ENCODE measurements at regions of chr1 and their contacts with region 1.

Region 1: DNA sequence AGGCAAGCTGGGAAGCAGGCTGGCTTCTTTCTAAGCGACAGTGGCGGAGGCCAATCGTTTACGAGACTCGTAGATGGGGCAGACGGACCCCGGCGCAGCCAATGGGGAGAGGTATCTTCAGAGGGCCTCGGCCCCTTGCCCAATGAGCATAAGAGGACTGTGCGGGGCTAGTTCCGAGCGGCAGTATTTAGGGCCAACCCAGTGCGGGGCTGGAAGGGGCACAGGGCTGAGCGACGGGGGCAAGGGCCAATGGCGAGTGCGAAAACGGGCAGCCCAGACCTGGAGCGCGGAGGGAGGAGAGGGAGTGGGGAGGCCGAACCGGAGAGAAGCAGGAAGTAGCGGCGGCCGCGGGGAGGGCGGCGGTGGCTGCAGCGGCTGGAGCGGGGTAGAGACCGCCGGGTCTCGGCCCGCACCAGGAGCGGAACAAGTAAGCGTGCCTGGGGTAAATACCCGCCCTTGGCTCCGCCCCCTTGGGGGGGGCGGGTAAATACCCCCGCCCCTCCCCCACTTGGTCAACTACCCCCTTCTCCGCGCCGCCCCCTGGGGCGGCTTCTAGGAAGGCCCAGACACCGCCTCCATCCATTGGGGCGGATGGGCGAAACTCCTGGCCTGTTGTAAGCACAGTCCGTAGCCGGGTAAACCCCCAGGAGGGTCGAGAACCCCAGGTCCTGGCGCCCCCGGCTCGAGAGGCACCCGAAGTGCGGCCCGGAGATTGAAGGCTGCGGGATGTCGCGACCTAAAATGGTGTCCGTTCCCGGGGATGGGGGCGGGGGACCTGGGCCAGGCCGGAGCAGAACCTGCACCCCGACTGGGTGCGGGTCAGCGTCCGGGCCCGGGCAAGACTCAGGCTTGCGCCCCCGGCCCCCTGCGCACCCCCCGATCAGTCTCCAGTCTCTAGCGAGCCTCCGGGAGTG is at the start of gene ZNF687:
- DNase-seq: peak; percentile 98 to 99
- ATAC-seq: peak; percentile 80 to 94 (median 84)
- H3K4me3 ChIP-seq: peak within 1 kb of the TSS; percentile 82
- H3K4me3 Mint-ChIP-seq: peak within 1 kb of the TSS; percentile 98
- H3K27ac ChIP-seq: peak within 1 kb of the TSS; percentile 93
- H3K27ac Mint-ChIP-seq: peak within 1 kb of the TSS; percentile 95 to 100
- H3K4me1 ChIP-seq: peaks cover 24% of the 10 kb centered on the region
- H3K4me1 Mint-ChIP-seq: peaks cover 31 to 33% of the 10 kb centered on the region in 2 donors
- H3K27me3 ChIP-seq: no peaks in the 10 kb centered on the region
- H3K27me3 Mint-ChIP-seq: no peaks in the 10 kb centered on the region
- CTCF ChIP-seq: no peak
- total RNA-seq, gene ZNF687: 48.1 to 52.2 (median 48.6) TPM

Region 2: DNA sequence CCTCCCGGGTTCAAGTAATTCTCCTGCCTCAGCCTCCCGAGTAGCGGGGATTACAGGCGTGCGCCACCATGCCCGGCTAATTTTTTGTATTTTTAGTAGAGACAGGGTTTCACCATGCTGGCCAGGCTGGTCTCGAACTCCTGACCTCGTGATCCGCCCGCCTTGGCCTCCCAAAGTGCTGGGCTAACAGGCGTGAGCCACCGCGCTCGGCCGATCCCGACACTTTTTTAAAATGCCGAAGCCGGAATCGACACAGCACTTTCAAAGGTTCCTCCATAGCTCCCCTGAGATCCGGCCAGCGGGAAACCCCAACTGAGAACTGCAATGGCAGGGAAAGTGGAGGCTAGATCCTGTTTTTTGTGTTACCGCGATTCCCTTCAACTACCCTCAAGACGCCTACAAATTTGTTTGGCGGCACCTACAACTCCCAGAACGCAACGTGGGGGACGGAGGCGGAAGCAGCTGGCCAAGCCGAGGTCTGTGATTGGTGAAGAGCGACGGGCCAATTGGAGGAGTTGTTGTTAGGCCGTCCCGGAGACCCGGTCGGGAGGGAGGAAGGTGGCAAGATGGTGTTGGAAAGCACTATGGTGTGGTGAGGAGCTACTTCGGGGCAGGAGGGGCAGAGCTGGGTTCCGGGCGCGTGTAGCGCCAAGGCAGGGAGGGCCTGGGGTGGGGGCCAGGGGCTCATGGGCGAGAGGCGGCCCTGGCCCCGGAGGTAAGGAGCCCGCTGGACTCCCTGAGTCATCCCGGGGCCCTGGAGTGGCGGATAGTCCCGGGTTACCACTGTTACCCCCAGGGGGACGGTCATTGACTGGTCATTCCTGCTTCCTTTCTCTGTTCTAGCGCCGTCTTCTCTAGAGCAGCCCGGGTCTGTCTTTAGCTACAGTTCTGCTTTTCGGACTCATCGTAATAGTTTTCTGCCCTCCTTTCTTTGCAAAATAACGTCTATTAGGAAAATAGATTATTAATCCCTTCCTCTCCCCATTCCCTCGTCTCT is 27.7 kb before region 1 on chr1 and contains the start of gene PSMD4:
- intact Hi-C with region 1: loop called (anchors 1 kb)
- DNase-seq: peak; percentile 89 to 98
- ATAC-seq: peak; percentile 91 to 99 (median 95)
- H3K4me3 ChIP-seq: peak within 1 kb of the TSS; percentile 81
- H3K4me3 Mint-ChIP-seq: peak within 1 kb of the TSS; percentile 96
- H3K27ac ChIP-seq: peak within 1 kb of the TSS; percentile 79
- H3K27ac Mint-ChIP-seq: peak within 1 kb of the TSS; percentile 94 to 97
- H3K4me1 ChIP-seq: peaks cover 15% of the 10 kb centered on the region
- H3K4me1 Mint-ChIP-seq: peaks cover 31 to 32% of the 10 kb centered on the region in 2 donors
- H3K27me3 ChIP-seq: no peaks in the 10 kb centered on the region
- H3K27me3 Mint-ChIP-seq: no peaks in the 10 kb centered on the region
- CTCF ChIP-seq: no peak
- total RNA-seq, gene PSMD4: 94.2 to 101 (median 99.3) TPM

Region 3: GRCh38 chr1:151340870-151341754 is 58.9 kb after region 1 on chr1:
- intact Hi-C with region 1: loop called (anchors 1 kb)
- DNase-seq: peak in 1 of 2 donors; percentile 87
- ATAC-seq: peak; percentile 83 to 92 (median 86)
- H3K4me3 ChIP-seq: no peak overlapping the region
- H3K4me3 Mint-ChIP-seq: no peak overlapping the region
- H3K27ac ChIP-seq: no peak overlapping the region
- H3K27ac Mint-ChIP-seq: peak overlapping the region; percentile 22 to 80
- H3K4me1 ChIP-seq: peaks cover 7% of the 10 kb centered on the region
- H3K4me1 Mint-ChIP-seq: peaks cover 14 to 22% of the 10 kb centered on the region in 2 donors
- H3K27me3 ChIP-seq: no peaks in the 10 kb centered on the region
- H3K27me3 Mint-ChIP-seq: no peaks in the 10 kb centered on the region
- CTCF ChIP-seq: peak; percentile 78

Region 4: GRCh38 chr1:151399890-151400495 is 117.8 kb after region 1 on chr1:
- intact Hi-C with region 1: loop called (anchors 1 kb)
- DNase-seq: peak in 1 of 2 donors; percentile 44
- ATAC-seq: peak; percentile 16 to 29 (median 21)
- H3K4me3 ChIP-seq: peak overlapping the region; percentile 90
- H3K4me3 Mint-ChIP-seq: peak overlapping the region; percentile 99
- H3K27ac ChIP-seq: peak overlapping the region; percentile 96
- H3K27ac Mint-ChIP-seq: peak overlapping the region; percentile 99 to 100
- H3K4me1 ChIP-seq: peaks cover 17% of the 10 kb centered on the region
- H3K4me1 Mint-ChIP-seq: peaks cover 20 to 21% of the 10 kb centered on the region in 2 donors
- H3K27me3 ChIP-seq: no peaks in the 10 kb centered on the region
- H3K27me3 Mint-ChIP-seq: no peaks in the 10 kb centered on the region
- CTCF ChIP-seq: no peak